Mammary epithelial cell (primary cell): ENCODE measurements at regions of chr5 and their contacts with region 1.

Region 1: DNA sequence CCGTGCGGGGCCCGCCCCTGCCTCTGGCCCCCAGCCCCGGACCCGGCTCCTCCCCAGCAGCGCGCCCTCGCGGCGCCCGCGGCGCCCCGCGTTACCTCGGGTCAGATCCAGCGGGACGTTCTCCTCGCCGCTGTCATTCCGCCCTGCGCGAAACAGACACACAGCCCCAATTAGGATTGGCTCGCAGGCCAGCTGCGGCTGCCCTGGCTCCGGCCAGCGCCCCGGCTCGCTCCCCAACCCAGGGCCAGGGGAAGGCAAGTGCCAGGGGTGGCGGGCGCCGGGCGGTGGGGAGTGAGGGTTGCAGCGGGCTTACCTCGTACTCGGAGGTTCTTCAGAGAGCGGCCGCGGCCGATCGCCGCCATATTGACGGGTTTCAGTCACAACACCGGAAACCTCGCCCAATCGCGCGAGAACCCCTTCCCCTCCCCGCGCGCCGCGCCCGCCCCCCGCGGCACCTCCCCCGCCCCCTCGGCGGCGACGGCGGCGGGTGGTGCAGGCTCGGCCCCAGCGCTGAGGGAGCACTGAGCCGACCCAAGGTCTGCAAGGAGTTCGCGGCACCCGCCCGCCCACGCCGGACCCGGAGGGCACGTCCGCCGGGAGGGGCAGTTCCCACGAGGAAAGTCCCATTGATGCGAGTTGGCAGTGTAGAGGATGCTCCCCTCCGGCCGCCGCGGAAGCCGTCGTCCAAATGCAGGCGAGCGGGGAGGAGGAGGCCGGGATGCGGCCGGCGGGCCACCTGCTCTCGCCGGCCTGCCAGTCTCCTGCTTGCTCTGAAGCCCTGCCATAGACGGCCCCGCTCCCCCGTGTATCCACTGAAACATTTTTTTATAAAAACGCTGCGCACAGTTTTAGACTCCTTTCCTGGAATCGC is at the start of gene RICTOR:
- DNase-seq: peak; percentile 91
- H3K4me3 ChIP-seq: peak within 1 kb of the TSS; percentile 63 to 100 (median 92)
- H3K27ac ChIP-seq: peak within 1 kb of the TSS; percentile 95
- H3K4me1 ChIP-seq: peaks cover 18% of the 10 kb centered on the region
- H3K27me3 ChIP-seq: no peaks in the 10 kb centered on the region
- CTCF ChIP-seq: no peak
- total RNA-seq, gene RICTOR: 28.6 to 34.8 TPM

Region 2: GRCh38 chr5:38994324-38994927 is 79.8 kb before region 1 on chr5:
- CTCF ChIA-PET with region 1: no interaction called
- dilution Hi-C with region 1: no loop called
- in situ Hi-C with region 1: no loop called
- intact Hi-C with region 1: loop called (anchors 1 kb)
- DNase-seq: peak; percentile 61
- H3K4me3 ChIP-seq: no peak overlapping the region
- H3K27ac ChIP-seq: no peak overlapping the region
- H3K4me1 ChIP-seq: no peaks in the 10 kb centered on the region
- H3K27me3 ChIP-seq: no peaks in the 10 kb centered on the region
- CTCF ChIP-seq: peak; percentile 49 to 63

Region 3: DNA sequence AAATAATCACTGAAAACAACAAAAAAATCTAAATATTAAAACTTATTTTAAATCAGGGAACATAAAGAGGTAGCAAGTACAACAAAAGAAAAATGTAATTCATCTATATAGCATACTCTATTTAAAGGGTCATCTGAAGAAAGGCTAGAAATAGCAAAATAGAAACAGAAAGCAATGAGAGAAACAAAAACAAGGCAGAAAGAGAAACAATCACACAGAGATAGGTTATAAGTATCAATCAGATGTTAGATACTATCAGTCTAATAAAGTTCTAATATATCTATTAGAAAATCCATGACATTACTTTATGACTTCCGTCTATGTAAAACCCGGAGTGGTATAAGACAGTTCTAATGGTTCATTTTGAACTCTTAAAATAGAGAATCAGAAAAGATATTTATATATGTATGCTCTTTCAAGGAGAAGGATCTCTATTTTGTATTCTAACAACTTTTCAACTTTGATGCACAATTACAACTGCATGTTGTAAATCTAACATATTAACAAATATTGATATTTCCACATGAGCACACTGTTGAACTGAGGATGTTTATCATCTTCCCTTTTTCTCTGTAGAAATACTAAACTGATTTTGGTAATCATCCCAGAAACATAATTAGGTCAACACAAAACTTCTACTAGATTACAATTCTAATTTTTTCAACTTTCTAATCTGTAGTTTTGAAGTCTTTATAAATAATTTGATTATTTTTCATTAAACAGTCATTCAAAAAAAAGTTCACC is 15.9 kb before region 1 on chr5:
- CTCF ChIA-PET with region 1: no interaction called
- dilution Hi-C with region 1: no loop called
- in situ Hi-C with region 1: no loop called
- intact Hi-C with region 1: loop called (anchors 1 kb)
- DNase-seq: no peak
- H3K4me3 ChIP-seq: peak overlapping the region; percentile 20 to 75 (median 50)
- H3K27ac ChIP-seq: peak overlapping the region; percentile 16
- H3K4me1 ChIP-seq: no peaks in the 10 kb centered on the region
- H3K27me3 ChIP-seq: no peaks in the 10 kb centered on the region
- CTCF ChIP-seq: no peak

Region 4: GRCh38 chr5:39106322-39106721 is 32.1 kb after region 1 on chr5:
- CTCF ChIA-PET with region 1: no interaction called
- dilution Hi-C with region 1: no loop called
- in situ Hi-C with region 1: no loop called
- intact Hi-C with region 1: loop called (anchors 1 kb)
- DNase-seq: no peak
- H3K4me3 ChIP-seq: no peak overlapping the region
- H3K27ac ChIP-seq: no peak overlapping the region
- H3K4me1 ChIP-seq: peaks cover 24% of the 10 kb centered on the region
- H3K27me3 ChIP-seq: no peaks in the 10 kb centered on the region
- CTCF ChIP-seq: peak; percentile 29 to 34